PC-9 (cell line): ENCODE measurements at regions of chr12 and their contacts with region 1.

Region 1: GRCh38 chr12:21697904-21698630 is 40.4 kb upstream of the LDHB start:
- DNase-seq: no peak
- H3K4me3 ChIP-seq: no peak overlapping the region
- H3K27ac ChIP-seq: no peak overlapping the region
- H3K4me1 ChIP-seq: no peaks in the 10 kb centered on the region
- H3K27me3 ChIP-seq: no peaks in the 10 kb centered on the region
- CTCF ChIP-seq: peak; percentile 84

Region 2: DNA sequence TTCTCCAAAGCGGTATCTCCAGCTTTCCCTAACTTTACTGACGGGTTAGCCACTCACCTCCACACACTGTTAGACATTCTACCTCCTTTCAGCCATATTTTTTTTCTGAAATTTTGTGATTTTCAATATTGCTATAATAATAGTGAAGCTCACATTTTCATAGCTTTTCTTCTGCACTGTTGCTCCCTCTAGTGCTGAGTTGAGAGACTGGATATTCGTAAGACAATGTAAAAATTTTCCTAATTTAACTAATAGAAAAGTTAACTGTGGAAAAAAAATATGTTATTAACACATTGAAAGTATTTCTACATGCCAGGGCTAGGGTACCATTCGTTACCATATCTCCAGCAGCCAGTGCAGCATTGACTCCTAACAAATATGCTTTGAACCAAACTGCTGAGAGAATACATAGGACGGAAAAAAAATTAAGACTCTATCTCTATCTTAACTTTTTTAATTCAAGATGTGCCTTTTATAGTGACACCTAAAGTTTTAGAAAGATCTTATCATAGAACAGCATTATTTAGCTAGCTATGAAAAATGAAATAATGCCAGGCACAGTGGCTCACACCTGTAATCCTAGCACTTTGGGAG is 291.8 kb after region 1 on chr12:
- CTCF ChIA-PET with region 1: interaction called, 23 read pairs
- POLR2A ChIA-PET with region 1: interaction called, 10 read pairs
- intact Hi-C with region 1: loop called (anchors 5 kb)
- DNase-seq: no peak
- H3K4me3 ChIP-seq: no peak overlapping the region
- H3K27ac ChIP-seq: no peak overlapping the region
- H3K4me1 ChIP-seq: no peaks in the 10 kb centered on the region
- H3K27me3 ChIP-seq: no peaks in the 10 kb centered on the region
- CTCF ChIP-seq: peak; percentile 68

Region 3: GRCh38 chr12:22018860-22019259 is 320.8 kb after region 1 on chr12:
- CTCF ChIA-PET with region 1: interaction called, 5 read pairs
- POLR2A ChIA-PET with region 1: no interaction called
- intact Hi-C with region 1: loop called (anchors 2 kb)
- DNase-seq: no peak
- H3K4me3 ChIP-seq: no peak overlapping the region
- H3K27ac ChIP-seq: no peak overlapping the region
- H3K4me1 ChIP-seq: 0 out of 2 replicates have a peak, but pooled peaks cover 8% of the 10 kb centered on the region
- H3K27me3 ChIP-seq: no peaks in the 10 kb centered on the region
- CTCF ChIP-seq: peak; percentile 77

Region 4: GRCh38 chr12:22459838-22460490 is 761.9 kb after region 1 on chr12:
- CTCF ChIA-PET with region 1: interaction called, 7 read pairs
- POLR2A ChIA-PET with region 1: no interaction called
- intact Hi-C with region 1: loop called (anchors 5 kb)
- DNase-seq: no peak
- H3K4me3 ChIP-seq: no peak overlapping the region
- H3K27ac ChIP-seq: no peak overlapping the region
- H3K4me1 ChIP-seq: no peaks in the 10 kb centered on the region
- H3K27me3 ChIP-seq: no peaks in the 10 kb centered on the region
- CTCF ChIP-seq: peak; percentile 71